Sigmoid colon (tissue), 7 donors: ENCODE measurements at regions of chr13 and their contacts with region 1.

Region 1: GRCh38 chr13:61410669-61411297 is 4.9 kb downstream of the PCDH20 start:
- DNase-seq: no peak
- H3K4me3 ChIP-seq: no peak overlapping the region
- H3K27ac ChIP-seq: no peak overlapping the region
- H3K4me1 ChIP-seq: peaks cover 0 to 23% (median 10%) of the 10 kb centered on the region in 4 donors
- H3K27me3 ChIP-seq: peaks cover 0 to 20% (median 6%) of the 10 kb centered on the region in 3 donors
- CTCF ChIP-seq: peak in 1 of 4 experiments; percentile 32
- EP300 ChIP-seq: no peak
- POLR2A ChIP-seq: no peak

Region 2: DNA sequence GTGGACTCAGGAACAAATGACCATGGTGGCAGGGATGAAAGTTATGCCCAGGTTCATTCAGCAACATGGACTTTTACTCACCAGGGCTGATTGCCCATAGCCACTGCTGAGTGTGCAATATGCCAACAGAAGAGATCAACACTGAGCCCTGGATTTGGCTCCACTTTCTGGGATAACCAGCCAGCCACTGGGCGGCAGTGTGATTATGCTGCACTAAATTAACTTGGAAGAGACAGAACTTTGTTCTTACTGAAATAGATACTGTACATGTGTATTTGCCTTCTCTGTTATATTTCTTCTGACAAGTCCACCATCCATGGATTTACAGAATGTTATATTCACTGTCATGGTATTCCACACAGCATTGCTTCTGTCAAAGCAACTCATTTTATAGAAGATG is 756.4 kb before region 1 on chr13:
- intact Hi-C with region 1: loop called (anchors 10 kb)
- DNase-seq: no peak
- H3K4me3 ChIP-seq: no peak overlapping the region
- H3K27ac ChIP-seq: no peak overlapping the region
- H3K4me1 ChIP-seq: no peaks in the 10 kb centered on the region
- H3K27me3 ChIP-seq: no peaks in the 10 kb centered on the region
- CTCF ChIP-seq: peak in 2 of 4 experiments; percentile 14 to 47
- EP300 ChIP-seq: no peak
- POLR2A ChIP-seq: no peak

Region 3: GRCh38 chr13:61286148-61286745 is 124.5 kb before region 1 on chr13:
- intact Hi-C with region 1: no loop called
- DNase-seq: no peak
- H3K4me3 ChIP-seq: no peak overlapping the region
- H3K27ac ChIP-seq: no peak overlapping the region
- H3K4me1 ChIP-seq: no peaks in the 10 kb centered on the region
- H3K27me3 ChIP-seq: no peaks in the 10 kb centered on the region
- CTCF ChIP-seq: no peak
- EP300 ChIP-seq: no peak
- POLR2A ChIP-seq: no peak